AG04449 (cell line): ENCODE measurements at regions of chr3 and their contacts with region 1.

Region 1: GRCh38 chr3:141360888-141361598 is 7.3 kb upstream of the ZBTB38 start:
- DNase-seq: peak; percentile 87
- H3K4me3 ChIP-seq: no peak overlapping the region; the same call in 1 of the 2 replicates
- CTCF ChIP-seq: peak; percentile 72

Region 2: DNA sequence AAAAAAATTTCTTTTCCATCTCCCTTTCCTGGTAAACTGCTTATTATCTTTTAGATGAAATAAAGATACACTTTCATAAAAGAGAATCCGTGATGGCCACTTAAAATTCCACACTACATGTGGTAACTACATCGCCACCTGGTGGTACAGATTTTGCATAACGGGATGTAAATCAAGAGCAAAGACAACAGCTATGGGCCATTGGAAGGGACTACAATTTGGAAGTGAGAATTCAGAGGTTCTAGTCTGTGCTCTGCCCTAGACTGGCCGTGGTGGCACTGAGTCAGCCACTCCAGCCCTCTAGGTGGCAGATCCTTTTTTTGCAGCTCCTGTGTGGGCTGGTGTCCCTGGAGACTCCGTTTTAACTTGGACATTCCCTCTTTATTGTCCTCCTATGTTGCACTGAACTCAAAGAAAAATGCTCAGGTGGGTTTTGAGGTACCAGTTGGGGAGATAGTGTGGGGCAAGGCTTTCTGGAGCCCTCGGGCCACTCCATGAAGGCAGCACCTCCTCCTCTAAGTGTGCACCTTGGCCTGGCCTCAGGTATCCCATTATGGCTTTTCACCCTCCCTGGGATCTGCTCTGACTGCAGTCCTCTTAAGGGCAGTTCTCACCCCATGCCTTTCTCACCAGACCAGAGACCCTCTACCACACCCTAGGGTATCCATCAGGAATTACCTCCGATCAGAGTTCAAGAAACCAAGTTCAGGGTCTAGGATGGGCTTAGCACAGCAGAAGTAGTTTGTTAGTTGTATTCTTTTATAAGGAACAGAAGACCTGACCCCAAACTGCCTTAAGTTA is 255.0 kb before region 1 on chr3:
- CTCF ChIA-PET with region 1: no interaction called
- POLR2A ChIA-PET with region 1: no interaction called
- DNase-seq: peak; percentile 33
- H3K4me3 ChIP-seq: no peak overlapping the region
- CTCF ChIP-seq: peak; percentile 59

Region 3: GRCh38 chr3:141336672-141337522 is 24.1 kb before region 1 on chr3:
- CTCF ChIA-PET with region 1: interaction called, 11 read pairs
- POLR2A ChIA-PET with region 1: interaction called, 9 read pairs
- DNase-seq: no peak
- H3K4me3 ChIP-seq: no peak overlapping the region
- CTCF ChIP-seq: no peak

Region 4: GRCh38 chr3:141386611-141387111 is 25.6 kb after region 1 on chr3:
- CTCF ChIA-PET with region 1: interaction called, 17 read pairs
- POLR2A ChIA-PET with region 1: no interaction called
- DNase-seq: no peak
- H3K4me3 ChIP-seq: no peak overlapping the region
- CTCF ChIP-seq: no peak

Region 5: GRCh38 chr3:141441381-141442364 is 80.6 kb after region 1 on chr3:
- CTCF ChIA-PET with region 1: interaction called, 102 read pairs
- POLR2A ChIA-PET with region 1: interaction called, 4 read pairs
- DNase-seq: peak; percentile 73
- H3K4me3 ChIP-seq: no peak overlapping the region
- CTCF ChIP-seq: peak; percentile 70

Region 6: GRCh38 chr3:141561426-141562034 is 200.5 kb after region 1 on chr3:
- CTCF ChIA-PET with region 1: interaction called, 16 read pairs
- POLR2A ChIA-PET with region 1: no interaction called
- DNase-seq: no peak
- H3K4me3 ChIP-seq: no peak overlapping the region
- CTCF ChIP-seq: peak; percentile 74